ENCODE measurements at regions of chr9 and their contacts with region 1.

Region 1: DNA sequence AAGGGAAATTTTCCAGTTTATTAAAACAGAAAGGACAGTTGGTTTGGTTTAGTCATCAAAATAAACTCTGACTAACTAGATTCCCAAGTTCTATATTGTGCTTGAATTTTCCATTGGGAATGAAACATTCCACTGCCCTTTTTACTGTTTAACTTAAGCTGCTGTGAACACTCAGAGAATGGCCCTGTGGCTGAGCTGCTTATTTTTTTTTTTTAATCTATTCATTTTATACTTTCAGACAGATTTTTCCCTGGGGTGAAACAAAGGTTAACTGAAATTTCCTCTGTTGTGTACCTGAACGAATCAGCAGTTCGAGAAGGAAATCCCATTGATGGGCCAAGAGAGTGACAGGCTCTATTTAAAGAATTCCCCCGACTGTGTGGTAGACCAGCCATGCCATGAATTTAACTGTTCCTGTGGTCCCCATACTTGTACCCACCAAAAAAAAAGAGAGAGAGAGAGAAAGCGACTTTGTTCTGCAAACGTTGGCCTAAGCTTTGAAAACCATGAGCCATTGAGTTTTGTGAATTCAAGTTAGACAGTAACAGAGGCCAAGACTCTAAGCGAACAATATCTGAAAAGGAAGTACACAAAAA is 138.7 kb upstream of the GRHPR start:
- DNase-seq: peak; percentile 72
- ATAC-seq: peak; percentile 63
- H3K4me3 ChIP-seq: peak overlapping the region; percentile 57
- H3K27ac ChIP-seq: peak overlapping the region; percentile 84
- H3K4me1 ChIP-seq: peaks cover 13% of the 10 kb centered on the region
- H3K27me3 ChIP-seq: no peaks in the 10 kb centered on the region
- CTCF ChIP-seq: no peak
- EP300 ChIP-seq: 0 out of 4 replicates have a peak, but pooled peaks of 1 of the 2 experiments have one; percentile 37
- POLR2A ChIP-seq: no peak
- RAD21 ChIP-seq: no peak

Region 2: DNA sequence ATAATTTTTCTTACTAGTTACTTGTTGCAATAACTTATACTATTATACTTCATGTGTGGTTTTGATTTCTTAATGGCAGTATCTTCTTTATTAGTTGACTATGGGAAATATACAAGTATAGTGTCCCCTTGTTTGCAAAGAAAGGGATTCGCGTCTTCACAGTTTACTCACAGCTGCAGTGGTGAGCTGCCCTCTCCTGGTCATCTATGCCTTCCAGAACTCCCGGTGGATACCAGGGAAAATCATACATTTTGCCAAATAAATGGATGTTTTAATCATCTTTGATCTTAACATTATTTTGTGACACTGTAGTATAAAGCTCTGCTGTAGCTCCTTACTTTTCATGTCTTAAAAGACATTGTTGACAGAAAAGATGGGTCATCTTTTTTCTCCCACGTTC is 21.4 kb before region 1 on chr9:
- CTCF ChIA-PET with region 1: interaction called, 7 read pairs
- POLR2A ChIA-PET with region 1: no interaction called
- RAD21 ChIA-PET with region 1: interaction called, 3 read pairs
- SMC1A ChIA-PET with region 1: interaction called, 14 read pairs
- in situ Hi-C with region 1: no loop called
- intact Hi-C with region 1: no loop called
- DNase-seq: no peak
- ATAC-seq: no peak
- H3K4me3 ChIP-seq: no peak overlapping the region
- H3K27ac ChIP-seq: no peak overlapping the region
- H3K4me1 ChIP-seq: no peaks in the 10 kb centered on the region
- H3K27me3 ChIP-seq: no peaks in the 10 kb centered on the region
- CTCF ChIP-seq: peak; percentile 9 to 49 (median 24); a peak in 3 of 6 replicates
- EP300 ChIP-seq: no peak
- POLR2A ChIP-seq: no peak
- RAD21 ChIP-seq: peak; percentile 45; the same call in 1 of the 2 replicates

Region 3: DNA sequence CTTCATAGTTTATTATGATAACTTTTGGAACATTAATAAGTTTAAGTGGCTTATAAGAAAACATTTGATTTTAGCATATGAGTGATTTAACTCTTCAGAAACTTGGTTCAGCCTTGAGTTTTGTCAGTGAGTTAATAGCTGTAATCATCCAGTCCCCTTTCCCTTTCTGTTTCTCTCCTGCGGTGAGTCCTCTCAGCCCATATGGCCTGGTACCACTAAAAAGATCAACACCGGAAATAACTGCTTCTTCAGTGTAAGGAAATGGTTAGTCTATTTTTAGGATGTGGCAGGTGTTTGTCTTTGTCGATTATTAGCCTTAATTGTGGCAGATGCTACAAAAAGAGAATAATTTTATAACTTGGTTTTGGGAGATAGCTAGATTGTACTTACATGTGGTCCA is 18.4 kb after region 1 on chr9:
- CTCF ChIA-PET with region 1: interaction called, 18 read pairs
- POLR2A ChIA-PET with region 1: interaction called, 7 read pairs
- RAD21 ChIA-PET with region 1: interaction called, 104 read pairs
- SMC1A ChIA-PET with region 1: interaction called, 19 read pairs
- in situ Hi-C with region 1: no loop called
- intact Hi-C with region 1: no loop called
- DNase-seq: peak; percentile 90
- ATAC-seq: peak; percentile 91
- H3K4me3 ChIP-seq: peak overlapping the region; percentile 43; the same call in 1 of the 2 replicates
- H3K27ac ChIP-seq: peak overlapping the region; percentile 95
- H3K4me1 ChIP-seq: peaks cover 48% of the 10 kb centered on the region
- H3K27me3 ChIP-seq: no peaks in the 10 kb centered on the region
- CTCF ChIP-seq: no peak
- EP300 ChIP-seq: peak; percentile 82 to 93
- POLR2A ChIP-seq: no peak
- RAD21 ChIP-seq: peak; percentile 31; the same call in 1 of the 2 replicates